B cell (primary cell): ENCODE measurements at regions of chr20 and their contacts with region 1.

Region 1: GRCh38 chr20:36605399-36606157 is at the start of gene RAB5IF:
- DNase-seq: peak; percentile 100
- ATAC-seq: peak; percentile 83
- H3K4me3 ChIP-seq: peak within 1 kb of the TSS; percentile 72 to 97 (median 90)
- H3K4me3 Mint-ChIP-seq: peak within 1 kb of the TSS; percentile 97
- H3K27ac ChIP-seq: peak within 1 kb of the TSS; percentile 91 to 97
- H3K27ac Mint-ChIP-seq: peak within 1 kb of the TSS; percentile 95
- H3K4me1 ChIP-seq: peaks cover 23 to 39% of the 10 kb centered on the region in 2 donors
- H3K4me1 Mint-ChIP-seq: peaks cover 46% of the 10 kb centered on the region
- H3K27me3 ChIP-seq: no peaks in the 10 kb centered on the region
- H3K27me3 Mint-ChIP-seq: no peaks in the 10 kb centered on the region
- CTCF ChIP-seq: peak; percentile 90
- total RNA-seq, gene RAB5IF: 40.1 and 41.4 TPM in 2 replicates

Region 2: DNA sequence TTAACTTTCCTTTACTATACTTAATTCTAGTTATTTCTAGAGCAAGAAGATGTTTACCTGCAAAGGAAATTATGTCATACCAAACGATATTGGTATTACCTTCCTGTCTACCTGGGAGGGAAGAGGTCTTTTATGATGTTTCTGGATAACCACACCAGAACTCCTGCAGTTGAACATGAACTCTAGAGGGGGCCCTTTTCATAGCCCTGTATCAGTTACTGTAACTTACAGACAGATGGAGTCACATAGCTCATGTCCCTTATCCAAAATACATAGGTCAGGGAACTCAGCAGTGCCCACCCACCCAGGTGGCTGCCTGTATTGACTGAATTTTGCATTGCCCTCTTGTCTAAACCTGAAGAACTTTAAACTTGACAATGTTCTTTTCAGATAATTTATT is 99.3 kb before region 1 on chr20:
- CTCF ChIA-PET with region 1: interaction called, 6 read pairs
- POLR2A ChIA-PET with region 1: no interaction called
- intact Hi-C with region 1: loop called (anchors 1 kb)
- DNase-seq: peak; percentile 35
- ATAC-seq: peak; percentile 60
- H3K4me3 ChIP-seq: no peak overlapping the region
- H3K4me3 Mint-ChIP-seq: no peak overlapping the region
- H3K27ac ChIP-seq: peak overlapping the region in 1 of 2 donors; percentile 1
- H3K27ac Mint-ChIP-seq: no peak overlapping the region
- H3K4me1 ChIP-seq: no peaks in the 10 kb centered on the region
- H3K4me1 Mint-ChIP-seq: peaks cover 2% of the 10 kb centered on the region
- H3K27me3 ChIP-seq: no peaks in the 10 kb centered on the region
- H3K27me3 Mint-ChIP-seq: no peaks in the 10 kb centered on the region
- CTCF ChIP-seq: peak; percentile 50

Region 3: DNA sequence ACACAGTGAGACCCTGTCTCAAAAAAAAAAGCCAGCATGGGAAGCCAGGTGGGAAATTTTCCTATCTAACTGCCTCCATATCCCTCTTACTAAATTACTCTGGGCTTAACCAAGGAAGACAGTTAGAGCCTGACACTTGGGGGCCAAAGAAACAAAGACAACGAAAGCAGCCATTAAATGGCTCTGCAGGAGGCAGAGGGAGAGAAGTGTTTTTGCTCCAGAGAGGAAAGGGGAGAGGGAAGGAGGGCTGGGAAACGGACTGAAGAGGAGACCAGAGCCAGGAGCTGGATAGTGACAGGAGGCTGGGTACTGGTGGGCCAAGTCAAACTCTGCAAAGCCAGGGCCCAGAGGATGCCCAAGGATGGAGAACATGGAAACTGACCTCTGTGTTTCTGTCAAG is 42.9 kb before region 1 on chr20:
- CTCF ChIA-PET with region 1: interaction called, 36 read pairs
- POLR2A ChIA-PET with region 1: interaction called, 4 read pairs
- intact Hi-C with region 1: no loop called
- DNase-seq: no peak
- ATAC-seq: no peak
- H3K4me3 ChIP-seq: no peak overlapping the region
- H3K4me3 Mint-ChIP-seq: no peak overlapping the region
- H3K27ac ChIP-seq: no peak overlapping the region
- H3K27ac Mint-ChIP-seq: no peak overlapping the region
- H3K4me1 ChIP-seq: no peaks in the 10 kb centered on the region
- H3K4me1 Mint-ChIP-seq: no peaks in the 10 kb centered on the region
- H3K27me3 ChIP-seq: no peaks in the 10 kb centered on the region
- H3K27me3 Mint-ChIP-seq: no peaks in the 10 kb centered on the region
- CTCF ChIP-seq: no peak

Region 4: GRCh38 chr20:36591854-36592641 is 13.5 kb before region 1 on chr20:
- CTCF ChIA-PET with region 1: interaction called, 82 read pairs
- POLR2A ChIA-PET with region 1: interaction called, 98 read pairs
- intact Hi-C with region 1: loop called (anchors 1 kb)
- DNase-seq: no peak
- ATAC-seq: no peak
- H3K4me3 ChIP-seq: no peak overlapping the region
- H3K4me3 Mint-ChIP-seq: no peak overlapping the region
- H3K27ac ChIP-seq: peak overlapping the region in 1 of 2 donors; percentile 89
- H3K27ac Mint-ChIP-seq: peak overlapping the region; percentile 80
- H3K4me1 ChIP-seq: peaks cover 34 to 39% of the 10 kb centered on the region in 2 donors
- H3K4me1 Mint-ChIP-seq: peaks cover 55% of the 10 kb centered on the region
- H3K27me3 ChIP-seq: no peaks in the 10 kb centered on the region
- H3K27me3 Mint-ChIP-seq: no peaks in the 10 kb centered on the region
- CTCF ChIP-seq: no peak

Region 5: DNA sequence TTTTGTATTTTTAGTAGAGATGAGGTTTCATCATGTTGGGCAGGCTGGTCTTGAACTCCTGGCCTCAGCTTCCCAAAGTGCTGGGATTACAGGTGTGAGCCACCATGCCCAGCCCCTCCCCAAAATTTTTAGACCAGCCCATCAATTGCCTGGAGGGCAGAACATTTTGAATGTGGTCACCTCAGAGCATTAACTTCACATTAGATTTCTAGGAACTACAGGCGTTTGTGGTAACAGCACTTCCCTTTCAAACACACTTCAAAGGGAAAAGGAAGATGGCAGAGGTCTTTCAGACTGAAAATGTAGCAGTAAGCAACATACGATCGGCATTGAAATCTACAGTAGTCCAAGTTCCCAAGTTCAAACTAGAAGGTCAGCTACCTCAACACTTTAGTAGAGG is 52.7 kb after region 1 on chr20:
- CTCF ChIA-PET with region 1: no interaction called
- POLR2A ChIA-PET with region 1: no interaction called
- intact Hi-C with region 1: no loop called
- DNase-seq: no peak
- ATAC-seq: no peak
- H3K4me3 ChIP-seq: no peak overlapping the region
- H3K4me3 Mint-ChIP-seq: no peak overlapping the region
- H3K27ac ChIP-seq: no peak overlapping the region
- H3K27ac Mint-ChIP-seq: no peak overlapping the region
- H3K4me1 ChIP-seq: no peaks in the 10 kb centered on the region
- H3K4me1 Mint-ChIP-seq: no peaks in the 10 kb centered on the region
- H3K27me3 ChIP-seq: no peaks in the 10 kb centered on the region
- H3K27me3 Mint-ChIP-seq: no peaks in the 10 kb centered on the region
- CTCF ChIP-seq: no peak

Region 6: DNA sequence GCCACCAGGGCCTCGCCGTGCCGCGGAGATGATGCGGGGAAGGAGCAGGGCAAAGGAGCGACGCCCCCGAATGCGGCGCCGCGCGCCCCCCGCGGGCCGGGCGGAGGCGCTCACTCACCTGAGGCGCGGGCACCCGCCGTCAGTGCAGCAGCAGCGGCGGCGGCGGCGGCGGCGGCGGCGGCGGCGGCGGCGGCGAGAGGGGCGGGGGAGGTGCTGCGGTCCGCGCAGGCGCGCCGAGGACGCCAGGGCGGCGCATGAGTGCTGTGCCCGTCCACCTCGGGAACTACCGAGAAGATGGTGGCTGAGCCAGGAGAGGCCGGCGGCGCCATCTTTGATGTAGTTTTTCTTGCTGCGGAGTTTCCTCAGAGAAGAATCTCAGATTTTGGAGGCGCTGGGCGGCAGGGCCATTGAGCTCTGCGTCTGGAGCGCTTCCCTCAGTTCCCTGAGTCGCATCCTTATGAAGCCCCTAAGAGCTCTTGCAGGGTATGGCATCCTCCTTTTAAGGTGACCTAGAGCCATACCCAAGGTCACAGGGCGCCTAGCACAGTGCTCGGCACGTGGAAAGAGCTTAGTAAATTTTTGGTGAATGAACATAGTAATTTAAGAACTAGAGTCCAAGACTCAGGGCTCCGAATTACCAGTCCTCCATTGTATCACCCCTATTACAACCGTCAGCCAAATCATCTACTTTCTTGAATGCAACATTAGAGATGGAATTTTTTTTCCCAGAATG is 140.5 kb after region 1 on chr20 and contains the start of gene NDRG3:
- CTCF ChIA-PET with region 1: interaction called, 3 read pairs
- POLR2A ChIA-PET with region 1: interaction called, 4 read pairs
- intact Hi-C with region 1: loop called (anchors 1 kb)
- DNase-seq: peak; percentile 96
- ATAC-seq: peak; percentile 97
- H3K4me3 ChIP-seq: peak within 1 kb of the TSS; percentile 55 to 87 (median 74)
- H3K4me3 Mint-ChIP-seq: peak within 1 kb of the TSS; percentile 91
- H3K27ac ChIP-seq: peak within 1 kb of the TSS; percentile 50 to 79
- H3K27ac Mint-ChIP-seq: peak within 1 kb of the TSS; percentile 93
- H3K4me1 ChIP-seq: peaks cover 12 to 13% of the 10 kb centered on the region in 2 donors
- H3K4me1 Mint-ChIP-seq: peaks cover 21% of the 10 kb centered on the region
- H3K27me3 ChIP-seq: no peaks in the 10 kb centered on the region
- H3K27me3 Mint-ChIP-seq: no peaks in the 10 kb centered on the region
- CTCF ChIP-seq: peak; percentile 26
- total RNA-seq, gene NDRG3: 26.1 and 27.5 TPM in 2 replicates

Region 7: DNA sequence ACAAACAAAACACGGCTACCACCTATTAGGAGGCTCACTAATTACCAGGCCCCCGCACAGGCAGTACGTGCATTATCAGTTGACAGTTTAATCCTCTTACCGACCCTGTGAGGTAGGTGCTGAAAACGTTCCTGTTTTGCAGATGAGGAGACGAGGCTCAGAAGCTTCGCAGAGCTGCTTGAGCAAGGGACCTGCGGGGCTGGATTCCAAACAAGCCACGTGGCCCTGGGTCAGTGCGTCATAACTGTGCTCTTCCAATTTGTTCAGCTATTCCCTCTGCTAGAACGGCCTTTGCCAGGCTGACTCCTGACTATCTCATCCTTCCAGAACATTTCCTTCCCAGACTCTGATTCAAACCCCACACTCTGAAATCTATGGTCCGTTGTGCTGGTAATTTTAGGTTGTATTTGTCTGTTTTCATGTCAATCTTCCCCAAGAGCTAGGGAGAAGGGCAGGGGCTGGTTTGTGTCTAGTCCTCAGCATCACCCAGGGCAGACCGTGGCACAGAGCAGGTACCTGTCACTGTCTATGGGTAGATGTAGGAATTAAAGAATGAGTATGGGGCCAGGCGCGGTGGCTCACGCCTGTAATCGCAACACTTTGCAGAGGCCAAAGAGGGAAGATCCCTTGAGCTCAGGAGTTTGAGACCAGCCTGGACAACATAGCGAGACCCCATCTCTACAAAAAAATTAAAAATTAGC is 241.6 kb after region 1 on chr20:
- CTCF ChIA-PET with region 1: no interaction called
- POLR2A ChIA-PET with region 1: interaction called, 3 read pairs
- intact Hi-C with region 1: loop called (anchors 1 kb)
- DNase-seq: no peak
- ATAC-seq: no peak
- H3K4me3 ChIP-seq: no peak overlapping the region
- H3K4me3 Mint-ChIP-seq: peak overlapping the region; percentile 11
- H3K27ac ChIP-seq: peak overlapping the region; percentile 97 to 98
- H3K27ac Mint-ChIP-seq: peak overlapping the region; percentile 96
- H3K4me1 ChIP-seq: peaks cover 82 to 95% of the 10 kb centered on the region in 2 donors
- H3K4me1 Mint-ChIP-seq: peaks cover 80% of the 10 kb centered on the region
- H3K27me3 ChIP-seq: no peaks in the 10 kb centered on the region
- H3K27me3 Mint-ChIP-seq: no peaks in the 10 kb centered on the region
- CTCF ChIP-seq: no peak